ENCODE measurements at regions of chr17 and their contacts with region 1.

Region 1: DNA sequence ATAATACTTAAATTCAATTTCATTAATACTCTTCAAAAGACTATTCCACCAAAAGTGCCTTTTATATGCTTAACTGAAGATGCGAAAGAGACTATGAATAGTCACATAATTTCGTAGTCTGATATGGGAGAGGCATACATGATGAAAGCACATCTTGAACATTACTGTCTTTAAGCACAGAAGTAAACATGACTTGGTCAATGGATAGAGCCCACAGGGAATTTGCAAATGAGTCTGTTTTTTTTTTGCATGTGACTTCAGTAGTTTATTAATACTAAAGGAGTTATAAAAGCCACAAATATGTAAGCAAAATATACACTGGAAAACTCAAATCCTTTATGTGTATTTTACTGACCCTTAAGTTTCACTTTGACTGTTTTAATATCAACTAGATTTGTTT is 15.9 kb downstream of the ADPRM start:
- DNase-seq: no peak
- ATAC-seq: no peak
- H3K4me3 ChIP-seq: no peak overlapping the region
- H3K27ac ChIP-seq: no peak overlapping the region
- H3K4me1 ChIP-seq: peaks cover 3% of the 10 kb centered on the region
- H3K27me3 ChIP-seq: no peaks in the 10 kb centered on the region
- CTCF ChIP-seq: no peak
- POLR2A ChIP-seq: no peak

Region 2: DNA sequence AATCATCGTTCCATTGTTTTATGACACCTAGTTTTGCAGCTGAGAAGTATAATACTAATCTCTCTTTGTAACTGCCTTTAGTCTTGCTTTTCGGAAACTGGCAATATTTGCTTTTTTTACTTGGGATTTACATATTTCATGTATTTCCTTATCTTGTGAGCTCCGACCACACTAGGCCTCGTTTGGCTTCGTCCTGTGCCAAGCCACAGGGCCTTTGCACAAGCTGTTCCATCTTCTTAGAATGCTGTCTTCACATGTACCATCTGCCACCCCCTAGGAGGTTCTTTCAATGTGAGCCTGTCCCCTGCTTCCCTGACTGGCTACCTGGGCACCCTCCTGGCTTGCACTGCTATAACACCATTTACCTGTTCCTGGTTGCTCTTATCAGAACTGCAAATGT is 604.9 kb after region 1 on chr17:
- intact Hi-C with region 1: loop called (anchors 2 kb)
- DNase-seq: no peak
- ATAC-seq: no peak
- H3K4me3 ChIP-seq: no peak overlapping the region
- H3K27ac ChIP-seq: no peak overlapping the region
- H3K4me1 ChIP-seq: peaks cover 3% of the 10 kb centered on the region
- H3K27me3 ChIP-seq: no peaks in the 10 kb centered on the region
- CTCF ChIP-seq: no peak
- POLR2A ChIP-seq: no peak